GM18951 (cell line): ENCODE measurements at regions of chr15 and their contacts with region 1.

Region 1: GRCh38 chr15:56821721-56822425 is 88.6 kb upstream of the ZNF280D start:
- POLR2A ChIP-seq: no peak

Region 2: DNA sequence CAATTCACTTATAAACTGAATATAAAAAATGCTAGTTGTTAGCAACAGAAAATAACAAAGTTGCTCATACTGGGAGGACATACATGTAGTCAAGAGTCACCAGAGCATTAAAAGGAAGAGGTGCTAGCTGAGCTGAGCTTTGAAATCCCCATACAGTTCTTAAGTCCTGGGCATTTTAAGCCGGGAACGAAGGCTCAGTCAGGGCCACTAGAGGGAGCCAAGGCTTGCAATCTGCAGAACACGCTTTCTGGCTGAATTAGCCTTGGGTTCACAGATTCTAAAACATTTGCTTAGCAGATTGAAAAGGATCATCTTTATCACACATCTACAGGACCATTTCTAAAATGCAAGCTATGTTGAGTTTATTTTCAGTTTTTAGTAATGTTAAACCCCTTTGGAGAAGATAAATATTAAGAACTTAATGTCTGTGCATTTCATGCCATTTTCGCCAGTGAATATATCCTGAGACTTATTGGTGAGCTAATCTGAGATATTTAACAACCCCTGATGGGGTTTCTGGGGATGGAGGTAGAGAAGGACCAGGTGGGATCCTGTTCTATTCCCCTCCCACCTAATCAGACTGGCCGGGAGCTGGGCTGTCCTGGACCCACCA is 330.7 kb before region 1 on chr15:
- in situ Hi-C with region 1: loop called (anchors 25 kb)
- POLR2A ChIP-seq: no peak

Region 3: DNA sequence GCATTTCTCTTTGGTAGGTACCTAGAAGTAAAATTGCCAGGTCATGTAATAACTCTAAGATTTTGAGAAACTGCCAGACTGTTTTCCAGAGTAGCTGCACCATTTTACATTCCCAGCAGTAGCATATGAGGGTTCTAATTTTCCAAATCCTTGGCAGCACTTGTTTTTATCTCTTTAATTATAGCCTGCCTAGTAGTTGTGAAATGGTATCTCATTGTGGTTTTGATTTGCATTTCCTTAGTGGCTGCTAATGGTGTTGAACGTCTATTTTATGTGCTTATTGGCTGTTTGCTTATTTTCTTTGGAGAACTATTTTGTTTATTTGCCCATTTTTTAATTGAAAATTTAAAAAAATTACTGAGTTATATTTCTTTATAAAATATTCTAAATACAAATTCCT is 214.5 kb after region 1 on chr15:
- in situ Hi-C with region 1: no loop called
- POLR2A ChIP-seq: no peak

Region 4: DNA sequence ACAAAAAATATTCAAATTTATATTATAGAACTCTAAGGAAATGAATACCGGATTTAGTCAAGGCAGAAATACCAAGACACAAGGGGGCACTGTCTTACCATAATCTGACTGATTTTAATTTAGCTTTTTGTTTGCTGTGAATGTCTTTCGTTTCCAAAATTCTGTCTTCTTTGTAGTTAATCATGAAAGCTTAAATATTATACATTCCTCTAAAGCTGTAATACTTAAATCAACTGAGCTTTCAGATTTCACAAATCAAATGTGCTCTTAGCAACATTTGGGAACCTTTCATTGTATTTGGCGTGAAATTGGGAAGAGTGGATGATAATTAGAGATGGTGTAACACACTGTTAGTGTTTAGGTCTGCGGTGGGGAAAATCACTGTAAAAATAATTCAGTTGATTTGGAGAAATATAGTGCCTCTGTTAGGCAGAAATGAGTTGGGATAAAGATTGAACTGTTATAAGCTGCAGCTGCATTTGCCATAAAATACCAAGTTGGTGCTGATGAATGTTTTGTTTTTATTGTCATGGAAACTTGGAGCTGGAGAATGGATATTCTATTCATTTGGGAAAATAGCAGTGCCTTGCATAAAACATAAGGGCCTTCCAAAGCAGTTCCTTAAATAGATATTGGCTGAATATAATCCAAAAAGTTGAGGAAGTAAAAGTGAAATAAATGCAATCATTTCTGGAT is 324.8 kb after region 1 on chr15:
- in situ Hi-C with region 1: loop called (anchors 10 kb)
- POLR2A ChIP-seq: no peak

Region 5: GRCh38 chr15:57527382-57528091 is 705.7 kb after region 1 on chr15:
- in situ Hi-C with region 1: loop called (anchors 25 kb)
- POLR2A ChIP-seq: no peak